Head of caudate nucleus (tissue), 42 donors: ENCODE measurements at regions of chr1 and their contacts with region 1.

Region 1: GRCh38 chr1:210250998-210251679 is 18.5 kb downstream of the SERTAD4 start:
- DNase-seq: peak; percentile 73 to 93 (median 87)

Region 2: DNA sequence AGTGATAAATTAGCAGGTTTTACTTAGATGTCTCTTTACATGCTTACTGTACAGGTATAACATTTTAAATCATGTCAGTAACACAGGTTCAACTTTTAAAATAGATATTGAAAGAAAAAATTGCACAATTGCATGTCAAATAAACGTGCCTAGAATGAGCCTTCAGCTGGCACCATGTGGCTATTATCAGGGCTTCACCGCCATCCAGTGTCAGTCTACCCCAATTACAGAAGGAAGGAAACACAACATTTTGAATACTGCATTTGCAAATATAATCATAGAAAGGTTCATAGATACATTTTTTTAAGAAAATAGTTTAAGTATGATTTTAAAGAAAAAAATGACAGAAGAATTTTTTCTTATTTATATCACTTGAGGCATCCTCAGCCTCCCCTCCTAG is 66.1 kb before region 1 on chr1:
- intact Hi-C with region 1: no loop called
- DNase-seq: no peak

Region 3: GRCh38 chr1:210301615-210302000 is 50.5 kb after region 1 on chr1:
- intact Hi-C with region 1: loop called (anchors 10 kb)
- DNase-seq: peak in 1 of 42 donors; percentile 10

Region 4: GRCh38 chr1:210377731-210378333 is 126.7 kb after region 1 on chr1:
- intact Hi-C with region 1: no loop called
- DNase-seq: no peak